CD4-positive, alpha-beta memory T cell (primary cell): ENCODE measurements at regions of chr6 and their contacts with region 1.

Region 1: GRCh38 chr6:27893059-27893835 is 18.9 kb downstream of the OR2B2 start:
- DNase-seq: peak; percentile 91 to 94 (median 93)
- H3K4me3 ChIP-seq: peak overlapping the region; percentile 72 to 86
- H3K4me3 Mint-ChIP-seq: no peak overlapping the region
- H3K27ac ChIP-seq: peak overlapping the region; percentile 80
- H3K27ac Mint-ChIP-seq: no peak overlapping the region
- H3K4me1 ChIP-seq: peaks cover 30% of the 10 kb centered on the region
- H3K4me1 Mint-ChIP-seq: peaks cover 15 to 40% (median 28%) of the 10 kb centered on the region in 4 donors
- H3K27me3 ChIP-seq: no peaks in the 10 kb centered on the region
- H3K27me3 Mint-ChIP-seq: no peaks in the 10 kb centered on the region

Region 2: GRCh38 chr6:26183581-26184366 is 1709.5 kb before region 1 on chr6:
- CTCF ChIA-PET with region 1: no interaction called
- POLR2A ChIA-PET with region 1: interaction called, 14 read pairs
- intact Hi-C with region 1: no loop called
- DNase-seq: peak; percentile 72 to 81 (median 79)
- H3K4me3 ChIP-seq: peak overlapping the region; percentile 2 to 69
- H3K4me3 Mint-ChIP-seq: peak overlapping the region; percentile 90 to 100 (median 96)
- H3K27ac ChIP-seq: peak overlapping the region; percentile 67
- H3K27ac Mint-ChIP-seq: peak overlapping the region; percentile 78 to 99 (median 95)
- H3K4me1 ChIP-seq: peaks cover 45% of the 10 kb centered on the region
- H3K4me1 Mint-ChIP-seq: peaks cover 29 to 54% (median 37%) of the 10 kb centered on the region in 4 donors
- H3K27me3 ChIP-seq: no peaks in the 10 kb centered on the region
- H3K27me3 Mint-ChIP-seq: no peaks in the 10 kb centered on the region

Region 3: DNA sequence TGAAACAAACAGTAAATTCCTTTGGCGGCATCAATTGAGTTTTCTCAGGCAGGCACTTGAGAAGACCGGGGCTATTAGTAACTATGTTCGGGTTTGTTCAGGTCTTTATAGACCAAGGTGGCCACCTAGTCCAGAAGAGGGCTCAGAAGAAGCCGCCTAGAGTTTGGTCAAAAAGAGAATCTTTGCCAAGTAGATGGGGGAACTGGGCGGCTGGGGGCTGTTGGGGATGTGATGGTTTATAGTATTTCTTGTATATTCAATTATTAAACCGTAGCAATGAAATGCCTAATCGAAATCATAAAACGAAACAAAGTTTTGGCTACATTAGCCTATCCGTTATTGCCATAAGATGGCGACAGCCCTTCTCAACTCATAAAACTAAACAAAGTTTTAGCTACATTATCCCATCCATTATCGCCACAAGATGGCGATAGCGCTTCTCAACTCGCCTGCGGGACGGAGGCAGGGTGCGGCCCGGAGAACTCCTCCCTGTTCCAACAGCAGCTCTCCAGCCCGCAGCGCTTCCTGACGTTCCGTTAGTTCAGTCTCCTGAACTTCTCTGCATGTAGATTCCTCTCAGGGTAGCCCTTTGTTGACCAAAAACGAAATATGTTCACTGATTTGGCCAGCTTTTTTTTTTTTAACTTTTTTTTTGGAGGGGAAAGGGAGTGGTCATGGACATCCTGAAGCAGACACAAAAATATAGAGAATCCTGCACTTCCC is 766.3 kb before region 1 on chr6:
- CTCF ChIA-PET with region 1: interaction called, 14 read pairs
- POLR2A ChIA-PET with region 1: interaction called, 137 read pairs
- intact Hi-C with region 1: loop called (anchors 1 kb)
- DNase-seq: peak; percentile 78 to 86 (median 83)
- H3K4me3 ChIP-seq: peak overlapping the region; percentile 13 to 34
- H3K4me3 Mint-ChIP-seq: peak overlapping the region; percentile 71 to 87 (median 80)
- H3K27ac ChIP-seq: peak overlapping the region; percentile 37
- H3K27ac Mint-ChIP-seq: peak overlapping the region; percentile 79 to 91 (median 89)
- H3K4me1 ChIP-seq: peaks cover 16% of the 10 kb centered on the region
- H3K4me1 Mint-ChIP-seq: peaks cover 14 to 16% (median 16%) of the 10 kb centered on the region in 4 donors
- H3K27me3 ChIP-seq: no peaks in the 10 kb centered on the region
- H3K27me3 Mint-ChIP-seq: no peaks in the 10 kb centered on the region

Region 4: GRCh38 chr6:27312146-27312949 is 580.9 kb before region 1 on chr6 and contains the start of gene POM121L2:
- CTCF ChIA-PET with region 1: interaction called, 5 read pairs
- POLR2A ChIA-PET with region 1: no interaction called
- intact Hi-C with region 1: loop called (anchors 2 kb)
- DNase-seq: peak; percentile 50 to 68 (median 61)
- H3K4me3 ChIP-seq: peak within 1 kb of the TSS; percentile 44 to 57
- H3K4me3 Mint-ChIP-seq: peak within 1 kb of the TSS; percentile 81 to 86 (median 83)
- H3K27ac ChIP-seq: no peak within 1 kb of the TSS
- H3K27ac Mint-ChIP-seq: peak within 1 kb of the TSS in 3 of 7 donors; percentile 7 to 37 (median 21)
- H3K4me1 ChIP-seq: peaks cover 5% of the 10 kb centered on the region
- H3K4me1 Mint-ChIP-seq: peaks cover 0 to 14% (median 7%) of the 10 kb centered on the region in 4 donors
- H3K27me3 ChIP-seq: peaks cover 26% of the 10 kb centered on the region
- H3K27me3 Mint-ChIP-seq: peaks cover 39 to 55% of the 10 kb centered on the region in 2 donors
- total RNA-seq, gene POM121L2: not detected

Region 5: GRCh38 chr6:27777614-27778355 is 115.5 kb before region 1 on chr6:
- CTCF ChIA-PET with region 1: interaction called, 219 read pairs
- POLR2A ChIA-PET with region 1: interaction called, 59 read pairs
- intact Hi-C with region 1: loop called (anchors 1 kb)
- DNase-seq: no peak
- H3K4me3 ChIP-seq: no peak overlapping the region
- H3K4me3 Mint-ChIP-seq: no peak overlapping the region
- H3K27ac ChIP-seq: no peak overlapping the region
- H3K27ac Mint-ChIP-seq: no peak overlapping the region
- H3K4me1 ChIP-seq: peaks cover 1% of the 10 kb centered on the region
- H3K4me1 Mint-ChIP-seq: peaks cover 0 to 6% (median 3%) of the 10 kb centered on the region in 4 donors
- H3K27me3 ChIP-seq: peaks cover 5% of the 10 kb centered on the region
- H3K27me3 Mint-ChIP-seq: peaks cover 14 to 24% of the 10 kb centered on the region in 2 donors

Region 6: GRCh38 chr6:27871924-27872638 is 21.2 kb before region 1 on chr6:
- CTCF ChIA-PET with region 1: interaction called, 226 read pairs
- POLR2A ChIA-PET with region 1: interaction called, 827 read pairs
- intact Hi-C with region 1: loop called (anchors 1 kb)
- DNase-seq: peak; percentile 91 to 96 (median 94)
- H3K4me3 ChIP-seq: peak overlapping the region; percentile 77 to 89
- H3K4me3 Mint-ChIP-seq: peak overlapping the region; percentile 87 to 94 (median 90)
- H3K27ac ChIP-seq: peak overlapping the region; percentile 86
- H3K27ac Mint-ChIP-seq: peak overlapping the region; percentile 89 to 97 (median 94)
- H3K4me1 ChIP-seq: peaks cover 33% of the 10 kb centered on the region
- H3K4me1 Mint-ChIP-seq: peaks cover 24 to 48% (median 33%) of the 10 kb centered on the region in 4 donors
- H3K27me3 ChIP-seq: no peaks in the 10 kb centered on the region
- H3K27me3 Mint-ChIP-seq: no peaks in the 10 kb centered on the region